ENCODE measurements at regions of chr11 and their contacts with region 1.

Region 1: GRCh38 chr11:819129-819931 is 616 bp downstream of the PNPLA2 start:
- DNase-seq: peak; percentile 82
- H3K27ac ChIP-seq: peak overlapping the region; percentile 97
- CTCF ChIP-seq: no peak

Region 2: GRCh38 chr11:834371-835316 is 15.3 kb after region 1 on chr11:
- CTCF ChIA-PET with region 1: interaction called, 3 read pairs
- POLR2A ChIA-PET with region 1: interaction called, 10 read pairs
- DNase-seq: peak; percentile 87
- H3K27ac ChIP-seq: peak overlapping the region; percentile 99
- CTCF ChIP-seq: no peak

Measured in RWPE1 (cell line).